OCI-LY7 (cell line): ENCODE measurements at regions of chr6 and their contacts with region 1.

Region 1: GRCh38 chr6:7992002-7992815 is 72.0 kb downstream of the BLOC1S5 start:
- DNase-seq: peak; percentile 76
- H3K4me3 ChIP-seq: no peak overlapping the region
- H3K27ac ChIP-seq: no peak overlapping the region
- H3K4me1 ChIP-seq: peaks cover 10% of the 10 kb centered on the region
- CTCF ChIP-seq: peak; percentile 89

Region 2: GRCh38 chr6:7899101-7899888 is 92.9 kb before region 1 on chr6:
- CTCF ChIA-PET with region 1: interaction called, 5 read pairs
- POLR2A ChIA-PET with region 1: interaction called, 5 read pairs
- intact Hi-C with region 1: loop called (anchors 1 kb)
- DNase-seq: peak; percentile 59
- H3K4me3 ChIP-seq: no peak overlapping the region
- H3K27ac ChIP-seq: peak overlapping the region; percentile 78
- H3K4me1 ChIP-seq: peaks cover 65% of the 10 kb centered on the region
- CTCF ChIP-seq: peak; percentile 76

Region 3: DNA sequence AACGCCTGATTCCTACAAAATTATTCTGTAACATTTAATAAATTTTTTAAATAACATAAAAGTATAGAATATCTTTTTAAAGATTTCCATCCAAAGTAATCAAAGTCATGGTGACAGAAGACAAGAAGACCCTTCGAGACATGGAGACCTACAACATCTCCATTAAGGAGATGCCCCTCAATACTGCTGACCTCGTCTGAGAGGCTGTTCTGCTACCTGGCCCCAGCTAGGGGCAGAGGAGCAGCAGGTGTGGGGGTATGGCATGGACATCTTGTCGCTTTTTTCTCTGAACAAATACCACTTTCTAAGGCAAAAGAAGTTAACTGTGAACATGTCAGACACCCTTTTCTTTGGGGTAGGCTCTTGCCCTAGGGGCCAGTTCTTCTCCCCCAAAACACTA is 27.9 kb after region 1 on chr6:
- CTCF ChIA-PET with region 1: no interaction called
- POLR2A ChIA-PET with region 1: no interaction called
- intact Hi-C with region 1: no loop called
- DNase-seq: no peak
- H3K4me3 ChIP-seq: no peak overlapping the region
- H3K27ac ChIP-seq: no peak overlapping the region
- H3K4me1 ChIP-seq: peaks cover 19% of the 10 kb centered on the region
- CTCF ChIP-seq: no peak